ENCODE measurements at regions of chr5 and their contacts with region 1.

Region 1: DNA sequence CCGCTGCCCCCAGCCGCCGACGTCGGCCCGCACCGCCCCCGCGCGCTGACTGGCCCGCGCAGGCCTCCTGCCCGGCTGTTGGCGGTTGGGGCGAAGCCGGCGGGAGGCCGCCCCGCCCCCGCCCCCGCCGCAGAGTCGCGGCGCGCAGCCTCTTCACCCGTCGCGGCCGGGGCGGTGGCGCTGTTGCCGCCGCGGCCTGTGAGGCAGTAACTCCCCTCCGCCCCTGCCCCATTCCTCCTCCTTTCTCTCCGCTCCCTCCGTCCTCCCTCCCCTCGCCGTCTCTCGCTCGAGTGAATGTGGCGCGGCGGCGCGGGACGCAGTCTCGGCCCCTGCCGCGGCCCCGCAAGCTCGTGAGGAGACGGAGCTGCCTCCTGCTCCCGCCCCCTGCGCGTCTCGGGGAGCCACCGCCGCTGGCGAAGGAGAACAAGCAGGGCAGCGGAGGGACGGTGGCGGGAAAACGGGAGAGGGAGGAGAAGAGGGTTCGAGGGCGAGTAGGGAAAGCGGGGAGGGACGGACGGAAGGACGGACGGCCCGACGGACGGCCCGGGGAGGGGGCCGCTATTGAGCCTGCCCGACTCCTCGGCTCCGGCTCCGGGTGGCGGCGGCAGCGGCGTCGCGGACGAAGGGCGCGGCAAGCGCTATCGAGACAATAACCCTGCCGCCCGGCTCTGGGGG is 637 bp upstream of the ERBIN start:
- DNase-seq: peak; percentile 42 to 92 (median 86)
- H3K4me3 ChIP-seq: peak overlapping the region; percentile 56 to 98 (median 89)
- H3K27ac ChIP-seq: peak overlapping the region; percentile 92 to 100 (median 99)
- H3K27me3 ChIP-seq: no peaks in the 10 kb centered on the region
- CTCF ChIP-seq: peak in 42 of 56 donors; percentile 13 to 64 (median 41)

Region 2: GRCh38 chr5:65624571-65625555 is 300.9 kb before region 1 on chr5 and contains the starts of genes SHLD3 and TRAPPC13:
- intact Hi-C with region 1: loop called in 1 of 2 experiments (anchors 10 kb)
- DNase-seq: peak; percentile 73 to 88 (median 84)
- H3K4me3 ChIP-seq: peak within 1 kb of the TSS; percentile 71 to 100 (median 98)
- H3K27ac ChIP-seq: peak within 1 kb of the TSS; percentile 73 to 99 (median 93)
- H3K27me3 ChIP-seq: no peaks in the 10 kb centered on the region
- CTCF ChIP-seq: peak in 15 of 56 donors; percentile 2 to 43 (median 18)
- total RNA-seq, gene SHLD3: 1.4 to 7.4 (median 3.9) TPM
- total RNA-seq, gene TRAPPC13: 17.4 to 49.3 (median 32.9) TPM

Region 3: GRCh38 chr5:65730910-65731309 is 194.8 kb before region 1 on chr5:
- intact Hi-C with region 1: no loop called
- DNase-seq: no peak
- H3K4me3 ChIP-seq: no peak overlapping the region
- H3K27ac ChIP-seq: no peak overlapping the region
- H3K27me3 ChIP-seq: no peaks in the 10 kb centered on the region
- CTCF ChIP-seq: no peak

Region 4: DNA sequence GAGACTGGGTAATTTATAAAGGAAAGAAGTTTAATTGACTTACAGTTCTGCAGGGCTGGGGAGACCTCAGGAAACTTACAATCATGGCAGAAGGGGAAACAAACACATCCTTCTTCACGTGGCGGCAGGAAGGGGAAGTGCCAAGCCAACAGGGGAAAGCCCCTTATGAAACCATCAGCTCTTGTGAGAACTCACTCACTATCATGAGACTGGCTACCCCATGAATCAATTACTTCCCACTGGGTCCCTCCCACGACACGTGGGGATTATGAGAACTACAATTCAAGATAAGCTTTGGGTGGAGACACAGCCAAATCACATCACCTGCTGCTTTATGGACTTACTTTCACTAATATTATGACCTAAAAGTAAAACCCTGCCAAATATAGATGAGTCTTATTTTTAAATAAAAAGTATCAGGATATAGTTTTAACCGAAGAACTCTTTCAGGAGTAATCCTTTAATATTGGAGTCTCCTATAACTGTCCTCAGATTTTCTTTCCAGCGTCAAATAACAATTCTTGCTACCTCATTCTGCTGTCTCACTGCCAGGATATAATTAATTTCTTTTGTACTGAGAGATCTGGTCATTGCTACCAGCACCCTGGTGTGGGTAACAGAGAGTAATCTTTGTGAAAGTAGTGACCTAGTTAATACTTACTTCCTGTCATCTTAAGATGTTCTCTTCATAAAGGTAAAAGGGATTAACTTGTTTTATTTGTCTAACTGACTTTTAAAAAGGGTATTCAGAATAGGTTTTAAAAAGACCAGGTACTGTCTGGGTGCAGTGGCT is 135.2 kb before region 1 on chr5:
- intact Hi-C with region 1: loop called in 1 of 2 experiments (anchors 10 kb)
- DNase-seq: no peak
- H3K4me3 ChIP-seq: no peak overlapping the region
- H3K27ac ChIP-seq: peak overlapping the region in 11 of 59 donors; percentile 2 to 92 (median 71)
- H3K27me3 ChIP-seq: no peaks in the 10 kb centered on the region
- CTCF ChIP-seq: no peak

Region 5: DNA sequence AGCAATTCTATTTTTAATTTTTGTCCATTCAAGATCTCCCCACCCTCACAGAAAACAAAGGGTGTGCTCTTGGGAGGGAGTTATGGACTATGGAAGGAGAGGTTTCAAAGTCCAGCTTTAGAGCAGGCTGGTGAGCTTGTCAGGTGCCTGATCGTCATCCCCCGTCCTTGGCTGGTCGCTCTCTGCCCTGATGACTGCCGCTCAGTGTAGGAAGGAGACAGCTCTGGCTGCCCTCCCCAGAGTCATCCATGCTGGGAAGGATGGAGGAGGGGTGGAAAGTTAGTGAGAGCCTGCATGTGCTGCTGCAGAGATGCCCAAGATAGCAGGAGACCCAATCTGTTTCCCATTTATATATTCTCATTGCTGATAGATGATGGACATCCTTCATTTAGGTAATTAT is 107.1 kb before region 1 on chr5:
- intact Hi-C with region 1: loop called in 1 of 2 experiments (anchors 5 kb)
- DNase-seq: peak; percentile 7 to 86 (median 77)
- H3K4me3 ChIP-seq: peak overlapping the region in 42 of 59 donors; percentile 0 to 53 (median 27)
- H3K27ac ChIP-seq: peak overlapping the region; percentile 31 to 98 (median 91)
- H3K27me3 ChIP-seq: no peaks in the 10 kb centered on the region
- CTCF ChIP-seq: no peak

Region 6: DNA sequence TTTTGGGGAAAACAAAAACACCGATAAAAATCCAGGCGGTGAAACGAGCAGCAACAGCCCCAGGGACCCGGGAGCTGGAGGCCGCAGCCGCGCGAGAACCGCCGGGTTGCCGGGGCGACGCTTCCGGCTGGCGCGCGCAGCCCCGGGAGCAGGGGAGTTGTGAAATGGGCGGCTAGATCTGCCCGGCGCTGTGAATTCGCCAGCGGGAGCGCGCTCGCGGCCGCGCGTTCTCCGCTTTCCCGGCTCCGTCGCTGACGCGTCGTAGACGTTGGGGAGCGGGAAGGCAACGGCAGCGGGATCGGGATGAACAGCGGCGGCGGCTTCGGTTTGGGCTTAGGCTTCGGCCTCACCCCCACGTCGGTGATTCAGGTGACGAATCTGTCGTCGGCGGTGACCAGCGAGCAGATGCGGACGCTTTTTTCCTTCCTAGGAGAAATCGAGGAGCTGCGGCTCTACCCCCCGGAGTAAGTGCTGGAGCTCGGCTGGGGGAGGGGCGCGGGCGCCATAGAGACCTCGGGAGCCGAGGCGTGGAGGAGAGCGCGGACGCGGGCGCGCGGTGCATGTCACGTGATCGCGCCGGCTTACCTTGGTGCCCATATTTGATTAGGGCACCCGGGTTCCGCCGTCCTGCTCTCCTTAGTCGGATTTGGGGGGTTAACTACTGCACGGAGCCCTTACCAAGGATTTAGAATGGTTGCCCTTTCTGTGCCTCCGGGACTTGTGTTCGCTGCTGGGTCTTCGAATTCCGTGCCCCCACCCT is 218.5 kb after region 1 on chr5 and contains the start of gene SREK1:
- intact Hi-C with region 1: loop called (anchors 1 to 2 kb)
- DNase-seq: peak; percentile 85 to 94 (median 92)
- H3K4me3 ChIP-seq: peak within 1 kb of the TSS; percentile 58 to 92 (median 81)
- H3K27ac ChIP-seq: peak within 1 kb of the TSS; percentile 85 to 100 (median 99)
- H3K27me3 ChIP-seq: no peaks in the 10 kb centered on the region
- CTCF ChIP-seq: peak in 21 of 56 donors; percentile 6 to 38 (median 24)
- total RNA-seq, gene SREK1: 53.0 to 95.6 (median 74.5) TPM